ENCODE measurements at regions of chr2 and their contacts with region 1.

Region 1: GRCh38 chr2:69717861-69718273 is 24.1 kb upstream of the ANXA4 start:
- DNase-seq: peak; percentile 49
- H3K4me3 ChIP-seq: no peak overlapping the region
- H3K27ac ChIP-seq: no peak overlapping the region
- H3K4me1 ChIP-seq: peaks cover 12% of the 10 kb centered on the region
- H3K27me3 ChIP-seq: no peaks in the 10 kb centered on the region
- CTCF ChIP-seq: no peak

Region 2: GRCh38 chr2:69386789-69387734 is 330.8 kb before region 1 on chr2 and contains the start of gene GFPT1:
- CTCF ChIA-PET with region 1: no interaction called
- dilution Hi-C with region 1: no loop called
- in situ Hi-C with region 1: no loop called
- intact Hi-C with region 1: loop called (anchors 10 kb)
- DNase-seq: peak; percentile 93
- H3K4me3 ChIP-seq: peak within 1 kb of the TSS; percentile 92 to 98 (median 98)
- H3K27ac ChIP-seq: peak within 1 kb of the TSS; percentile 74
- H3K4me1 ChIP-seq: peaks cover 11% of the 10 kb centered on the region
- H3K27me3 ChIP-seq: no peaks in the 10 kb centered on the region
- CTCF ChIP-seq: no peak
- total RNA-seq, gene GFPT1: 43.7 to 76.3 TPM

Region 3: DNA sequence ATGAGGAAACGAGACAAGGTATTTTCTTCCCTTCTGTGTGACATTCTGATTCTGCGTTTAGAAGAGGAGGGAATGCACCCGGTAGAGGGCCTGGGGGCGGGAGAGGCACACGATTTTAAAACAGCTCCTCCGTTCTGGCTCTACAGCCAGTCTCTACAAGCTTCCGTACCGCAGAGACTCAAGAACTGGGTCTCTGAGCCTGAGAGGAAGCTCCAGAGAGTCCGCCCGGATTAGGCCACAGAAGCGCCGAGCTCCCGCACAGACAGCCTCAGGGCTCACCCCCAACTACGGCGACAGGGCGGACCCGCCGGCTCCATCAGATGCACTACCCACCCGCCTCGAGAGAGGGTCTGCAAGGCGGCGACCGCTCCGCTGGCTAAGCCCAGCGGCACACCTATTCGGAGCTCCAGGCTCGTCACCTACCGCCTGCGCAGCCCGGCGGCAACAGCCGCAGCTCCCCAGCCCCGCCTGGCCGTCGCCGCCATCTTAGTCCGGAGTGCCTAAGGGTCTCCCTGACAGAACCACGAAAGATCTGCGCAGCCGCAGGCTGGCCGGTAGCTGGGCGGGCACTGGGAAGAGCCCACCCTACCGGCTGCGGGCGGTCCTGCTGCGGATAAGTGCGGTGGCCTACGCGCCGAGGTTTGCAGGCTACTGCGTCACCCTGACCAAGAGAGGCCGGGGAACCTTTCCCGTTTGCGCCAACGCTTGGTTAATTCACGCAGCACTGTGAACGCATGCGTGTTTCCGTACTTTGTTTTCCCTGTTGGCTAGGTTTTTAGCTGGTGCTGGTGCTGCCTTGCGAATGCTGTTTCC is 280.7 kb before region 1 on chr2 and contains the start of gene NFU1:
- CTCF ChIA-PET with region 1: no interaction called
- dilution Hi-C with region 1: no loop called
- in situ Hi-C with region 1: no loop called
- intact Hi-C with region 1: loop called (anchors 1 kb)
- DNase-seq: peak; percentile 85
- H3K4me3 ChIP-seq: peak within 1 kb of the TSS; percentile 61 to 89 (median 69)
- H3K27ac ChIP-seq: peak within 1 kb of the TSS; percentile 76
- H3K4me1 ChIP-seq: peaks cover 14% of the 10 kb centered on the region
- H3K27me3 ChIP-seq: no peaks in the 10 kb centered on the region
- CTCF ChIP-seq: peak; percentile 31 to 65
- total RNA-seq, gene NFU1: 23.0 to 39.3 TPM

Region 4: DNA sequence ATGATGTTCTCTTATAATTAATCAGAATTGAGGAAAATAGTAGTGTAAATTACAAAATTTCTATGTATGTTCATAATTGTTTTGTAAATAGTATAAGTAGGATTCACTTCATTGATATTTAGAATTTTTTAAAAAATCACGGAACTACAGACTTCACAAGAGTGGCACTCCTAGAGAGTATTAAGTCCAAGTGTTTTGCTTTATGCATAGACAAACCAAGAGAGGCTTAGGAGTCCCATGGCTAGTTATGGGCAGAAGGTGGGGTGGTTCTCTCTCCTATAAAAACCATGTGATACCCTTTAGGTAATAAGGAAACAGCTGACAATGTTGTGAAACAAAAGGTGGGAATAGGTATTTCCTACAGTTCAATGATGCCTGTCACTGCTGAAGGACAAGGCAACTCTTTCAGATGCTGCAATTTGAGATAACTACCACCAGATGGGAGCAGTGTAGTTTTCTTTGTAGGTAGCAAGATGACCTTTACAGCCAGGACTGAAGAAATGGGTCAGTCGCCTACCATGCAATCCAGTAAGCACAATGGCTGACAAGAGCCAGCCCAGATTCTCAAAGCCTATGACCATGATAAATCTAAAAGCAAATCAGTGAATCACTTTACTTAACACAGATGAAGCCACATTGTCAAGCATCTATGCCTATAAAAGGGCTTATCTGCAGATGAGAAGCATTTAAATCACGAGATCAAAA is 158.3 kb before region 1 on chr2:
- CTCF ChIA-PET with region 1: no interaction called
- dilution Hi-C with region 1: loop called (anchors 25 kb)
- in situ Hi-C with region 1: loop called (anchors 5 kb)
- intact Hi-C with region 1: loop called (anchors 1 kb)
- DNase-seq: peak; percentile 51
- H3K4me3 ChIP-seq: no peak overlapping the region
- H3K27ac ChIP-seq: no peak overlapping the region
- H3K4me1 ChIP-seq: peaks cover 8% of the 10 kb centered on the region
- H3K27me3 ChIP-seq: no peaks in the 10 kb centered on the region
- CTCF ChIP-seq: peak; percentile 76 to 84

Region 5: DNA sequence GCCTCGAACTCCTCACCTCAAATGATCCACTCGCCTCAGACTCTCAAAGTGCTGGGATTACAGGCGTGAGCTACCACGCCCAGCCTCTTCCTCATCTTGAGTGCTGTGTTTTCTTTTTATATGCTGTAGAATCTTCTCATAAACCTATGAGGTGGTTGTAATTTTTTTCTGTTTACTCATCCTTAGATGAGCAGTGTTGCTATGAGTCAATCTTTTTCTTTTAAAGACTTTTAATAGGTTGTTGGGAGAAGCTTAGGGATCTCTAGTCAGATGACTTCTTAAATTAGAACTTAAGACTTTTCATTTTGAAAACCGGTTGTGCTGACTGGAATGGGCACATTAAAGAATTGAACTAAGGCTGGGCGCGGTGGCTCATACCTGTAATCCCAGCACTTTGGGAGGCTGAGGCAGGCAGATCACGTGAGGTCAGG is 65.6 kb before region 1 on chr2:
- CTCF ChIA-PET with region 1: no interaction called
- dilution Hi-C with region 1: loop called (anchors 5 kb)
- in situ Hi-C with region 1: loop called in 1 of 2 experiments (anchors 5 kb)
- intact Hi-C with region 1: no loop called
- DNase-seq: peak; percentile 92
- H3K4me3 ChIP-seq: no peak overlapping the region
- H3K27ac ChIP-seq: peak overlapping the region; percentile 68
- H3K4me1 ChIP-seq: peaks cover 23% of the 10 kb centered on the region
- H3K27me3 ChIP-seq: no peaks in the 10 kb centered on the region
- CTCF ChIP-seq: no peak

Measured in mammary epithelial cell (primary cell).